CD4-positive, alpha-beta memory T cell (primary cell): ENCODE measurements at regions of chr14 and their contacts with region 1.

Region 1: GRCh38 chr14:65206448-65207096 is 104.3 kb upstream of the MAX start:
- DNase-seq: no peak
- H3K4me3 ChIP-seq: no peak overlapping the region
- H3K4me3 Mint-ChIP-seq: peak overlapping the region; percentile 50 to 89 (median 82)
- H3K27ac ChIP-seq: peak overlapping the region; percentile 47
- H3K27ac Mint-ChIP-seq: peak overlapping the region; percentile 78 to 98 (median 94)
- H3K4me1 ChIP-seq: peaks cover 72% of the 10 kb centered on the region
- H3K4me1 Mint-ChIP-seq: peaks cover 50 to 77% (median 62%) of the 10 kb centered on the region in 4 donors
- H3K27me3 ChIP-seq: no peaks in the 10 kb centered on the region
- H3K27me3 Mint-ChIP-seq: no peaks in the 10 kb centered on the region

Region 2: GRCh38 chr14:65102441-65103149 is 104.0 kb before region 1 on chr14 and contains the start of gene MAX:
- CTCF ChIA-PET with region 1: no interaction called
- POLR2A ChIA-PET with region 1: interaction called, 6 read pairs
- intact Hi-C with region 1: loop called (anchors 5 kb)
- DNase-seq: peak; percentile 98 to 100 (median 100)
- H3K4me3 ChIP-seq: peak within 1 kb of the TSS; percentile 77 to 100
- H3K4me3 Mint-ChIP-seq: peak within 1 kb of the TSS; percentile 91 to 100 (median 96)
- H3K27ac ChIP-seq: peak within 1 kb of the TSS; percentile 96
- H3K27ac Mint-ChIP-seq: peak within 1 kb of the TSS; percentile 92 to 99 (median 97)
- H3K4me1 ChIP-seq: peaks cover 41% of the 10 kb centered on the region
- H3K4me1 Mint-ChIP-seq: peaks cover 24 to 49% (median 35%) of the 10 kb centered on the region in 4 donors
- H3K27me3 ChIP-seq: no peaks in the 10 kb centered on the region
- H3K27me3 Mint-ChIP-seq: peaks cover 2 to 3% of the 10 kb centered on the region in 2 donors
- total RNA-seq, gene MAX: 188 to 212 TPM

Region 3: GRCh38 chr14:65164068-65164824 is 42.3 kb before region 1 on chr14:
- CTCF ChIA-PET with region 1: interaction called, 7 read pairs
- POLR2A ChIA-PET with region 1: interaction called, 11 read pairs
- intact Hi-C with region 1: no loop called
- DNase-seq: peak in 4 of 5 donors; percentile 57 to 64 (median 59)
- H3K4me3 ChIP-seq: no peak overlapping the region
- H3K4me3 Mint-ChIP-seq: no peak overlapping the region
- H3K27ac ChIP-seq: no peak overlapping the region
- H3K27ac Mint-ChIP-seq: no peak overlapping the region
- H3K4me1 ChIP-seq: no peaks in the 10 kb centered on the region
- H3K4me1 Mint-ChIP-seq: peaks cover 0 to 7% (median 5%) of the 10 kb centered on the region in 4 donors
- H3K27me3 ChIP-seq: no peaks in the 10 kb centered on the region
- H3K27me3 Mint-ChIP-seq: no peaks in the 10 kb centered on the region

Region 4: GRCh38 chr14:65170768-65171507 is 35.6 kb before region 1 on chr14:
- CTCF ChIA-PET with region 1: interaction called, 7 read pairs
- POLR2A ChIA-PET with region 1: interaction called, 8 read pairs
- intact Hi-C with region 1: loop called (anchors 5 kb)
- DNase-seq: peak; percentile 39 to 73 (median 43)
- H3K4me3 ChIP-seq: peak overlapping the region; percentile 39 to 45
- H3K4me3 Mint-ChIP-seq: peak overlapping the region; percentile 79 to 88 (median 83)
- H3K27ac ChIP-seq: no peak overlapping the region
- H3K27ac Mint-ChIP-seq: peak overlapping the region in 6 of 7 donors; percentile 8 to 87 (median 66)
- H3K4me1 ChIP-seq: peaks cover 8% of the 10 kb centered on the region
- H3K4me1 Mint-ChIP-seq: peaks cover 11 to 18% (median 13%) of the 10 kb centered on the region in 4 donors
- H3K27me3 ChIP-seq: no peaks in the 10 kb centered on the region
- H3K27me3 Mint-ChIP-seq: peaks cover 0 to 2% of the 10 kb centered on the region in 2 donors

Region 5: DNA sequence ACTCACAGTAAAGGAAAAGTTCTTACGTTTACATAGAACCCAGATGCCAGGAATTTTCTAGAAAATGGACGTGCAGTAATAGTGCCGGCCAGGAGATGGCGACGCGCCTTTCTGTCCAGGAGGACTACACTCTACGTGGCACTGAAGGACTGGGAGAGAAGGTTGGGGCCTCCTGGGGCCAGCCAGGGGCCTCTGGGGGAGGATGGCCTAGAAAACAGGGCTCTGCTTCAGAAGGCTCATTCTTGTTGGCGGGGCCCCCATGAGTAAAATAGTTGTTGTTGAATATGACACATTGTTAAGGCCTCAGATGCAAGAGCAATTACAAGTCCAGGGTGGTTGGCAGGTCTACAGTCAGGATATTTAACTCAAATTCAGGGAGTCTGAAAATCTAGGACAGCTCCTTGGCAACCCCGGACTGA is 15.9 kb after region 1 on chr14:
- CTCF ChIA-PET with region 1: interaction called, 20 read pairs
- POLR2A ChIA-PET with region 1: interaction called, 19 read pairs
- intact Hi-C with region 1: no loop called
- DNase-seq: peak; percentile 45 to 55 (median 48)
- H3K4me3 ChIP-seq: no peak overlapping the region
- H3K4me3 Mint-ChIP-seq: peak overlapping the region in 1 of 8 donors; percentile 64
- H3K27ac ChIP-seq: no peak overlapping the region
- H3K27ac Mint-ChIP-seq: peak overlapping the region; percentile 0 to 83 (median 42)
- H3K4me1 ChIP-seq: peaks cover 34% of the 10 kb centered on the region
- H3K4me1 Mint-ChIP-seq: peaks cover 23 to 59% (median 38%) of the 10 kb centered on the region in 4 donors
- H3K27me3 ChIP-seq: no peaks in the 10 kb centered on the region
- H3K27me3 Mint-ChIP-seq: no peaks in the 10 kb centered on the region

Region 6: GRCh38 chr14:65281991-65282895 is 75.7 kb after region 1 on chr14:
- CTCF ChIA-PET with region 1: interaction called, 4 read pairs
- POLR2A ChIA-PET with region 1: interaction called, 28 read pairs
- intact Hi-C with region 1: no loop called
- DNase-seq: peak in 4 of 5 donors; percentile 9 to 23 (median 18)
- H3K4me3 ChIP-seq: peak overlapping the region; percentile 25 to 30
- H3K4me3 Mint-ChIP-seq: peak overlapping the region; percentile 72 to 90 (median 84)
- H3K27ac ChIP-seq: peak overlapping the region; percentile 36
- H3K27ac Mint-ChIP-seq: peak overlapping the region; percentile 79 to 96 (median 94)
- H3K4me1 ChIP-seq: peaks cover 30% of the 10 kb centered on the region
- H3K4me1 Mint-ChIP-seq: peaks cover 26 to 48% (median 30%) of the 10 kb centered on the region in 4 donors
- H3K27me3 ChIP-seq: no peaks in the 10 kb centered on the region
- H3K27me3 Mint-ChIP-seq: no peaks in the 10 kb centered on the region